B cell (primary cell): ENCODE measurements at regions of chr14 and their contacts with region 1.

Region 1: GRCh38 chr14:49862089-49862673 is 9.6 kb upstream of the NEMF start:
- DNase-seq: peak; percentile 94
- ATAC-seq: peak; percentile 46
- H3K4me3 ChIP-seq: peak overlapping the region; percentile 64 to 99 (median 89)
- H3K4me3 Mint-ChIP-seq: no peak overlapping the region
- H3K27ac ChIP-seq: peak overlapping the region; percentile 96 to 99
- H3K27ac Mint-ChIP-seq: no peak overlapping the region
- H3K4me1 ChIP-seq: peaks cover 35 to 48% of the 10 kb centered on the region in 2 donors
- H3K4me1 Mint-ChIP-seq: peaks cover 25% of the 10 kb centered on the region
- H3K27me3 ChIP-seq: no peaks in the 10 kb centered on the region
- H3K27me3 Mint-ChIP-seq: no peaks in the 10 kb centered on the region
- CTCF ChIP-seq: peak; percentile 100

Region 2: DNA sequence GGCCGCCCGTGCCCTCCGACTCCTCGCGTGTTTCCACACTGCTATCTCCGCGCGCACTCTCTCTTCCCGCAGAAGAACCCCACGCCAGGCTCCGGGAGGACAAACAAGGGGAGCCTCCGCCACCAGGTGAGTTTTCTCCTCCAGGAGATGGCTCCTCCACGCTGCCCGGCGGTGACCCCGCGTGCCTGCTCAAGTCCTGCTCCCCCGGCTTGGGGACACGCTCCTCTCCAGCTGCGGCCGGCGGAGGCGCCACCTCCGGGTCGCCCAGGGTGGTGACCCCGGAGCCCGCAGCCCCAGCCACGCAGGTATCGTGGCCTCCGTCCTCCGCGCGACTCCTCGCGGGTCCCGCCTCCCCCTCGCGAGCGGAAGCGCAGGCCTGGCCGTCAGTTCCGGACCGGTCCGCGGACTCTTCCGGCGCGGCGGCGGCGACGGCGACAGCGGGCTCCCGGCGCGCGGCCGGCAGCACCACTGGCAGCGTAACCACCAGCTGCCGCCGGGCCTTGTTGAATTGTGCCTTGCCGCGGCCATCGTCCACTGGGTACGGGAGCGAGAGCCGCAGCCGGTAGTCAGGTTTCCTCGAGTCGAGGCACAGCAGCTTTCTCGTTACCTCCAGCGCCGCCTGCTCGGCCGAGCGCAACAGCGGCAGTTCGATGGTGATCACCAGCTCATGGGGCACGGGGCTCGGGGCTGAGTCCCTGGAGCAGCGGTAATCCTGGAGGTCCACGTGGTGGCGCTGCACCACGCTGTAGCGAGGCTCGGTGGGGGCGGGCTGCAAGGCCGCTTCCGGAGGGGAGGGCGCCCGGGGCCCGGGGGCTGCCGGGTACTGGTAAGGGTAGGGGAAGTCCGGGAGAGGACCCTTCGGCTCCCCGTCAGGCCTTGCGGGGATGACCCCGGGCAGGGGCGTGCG is 228.3 kb before region 1 on chr14:
- CTCF ChIA-PET with region 1: interaction called, 7 read pairs
- POLR2A ChIA-PET with region 1: interaction called, 14 read pairs
- intact Hi-C with region 1: no loop called
- DNase-seq: peak; percentile 97
- ATAC-seq: peak; percentile 80
- H3K4me3 ChIP-seq: peak overlapping the region; percentile 80 to 98 (median 91)
- H3K4me3 Mint-ChIP-seq: peak overlapping the region; percentile 96
- H3K27ac ChIP-seq: peak overlapping the region; percentile 97 to 98
- H3K27ac Mint-ChIP-seq: peak overlapping the region; percentile 97
- H3K4me1 ChIP-seq: peaks cover 20 to 26% of the 10 kb centered on the region in 2 donors
- H3K4me1 Mint-ChIP-seq: peaks cover 47% of the 10 kb centered on the region
- H3K27me3 ChIP-seq: no peaks in the 10 kb centered on the region
- H3K27me3 Mint-ChIP-seq: no peaks in the 10 kb centered on the region
- CTCF ChIP-seq: peak; percentile 85

Region 3: DNA sequence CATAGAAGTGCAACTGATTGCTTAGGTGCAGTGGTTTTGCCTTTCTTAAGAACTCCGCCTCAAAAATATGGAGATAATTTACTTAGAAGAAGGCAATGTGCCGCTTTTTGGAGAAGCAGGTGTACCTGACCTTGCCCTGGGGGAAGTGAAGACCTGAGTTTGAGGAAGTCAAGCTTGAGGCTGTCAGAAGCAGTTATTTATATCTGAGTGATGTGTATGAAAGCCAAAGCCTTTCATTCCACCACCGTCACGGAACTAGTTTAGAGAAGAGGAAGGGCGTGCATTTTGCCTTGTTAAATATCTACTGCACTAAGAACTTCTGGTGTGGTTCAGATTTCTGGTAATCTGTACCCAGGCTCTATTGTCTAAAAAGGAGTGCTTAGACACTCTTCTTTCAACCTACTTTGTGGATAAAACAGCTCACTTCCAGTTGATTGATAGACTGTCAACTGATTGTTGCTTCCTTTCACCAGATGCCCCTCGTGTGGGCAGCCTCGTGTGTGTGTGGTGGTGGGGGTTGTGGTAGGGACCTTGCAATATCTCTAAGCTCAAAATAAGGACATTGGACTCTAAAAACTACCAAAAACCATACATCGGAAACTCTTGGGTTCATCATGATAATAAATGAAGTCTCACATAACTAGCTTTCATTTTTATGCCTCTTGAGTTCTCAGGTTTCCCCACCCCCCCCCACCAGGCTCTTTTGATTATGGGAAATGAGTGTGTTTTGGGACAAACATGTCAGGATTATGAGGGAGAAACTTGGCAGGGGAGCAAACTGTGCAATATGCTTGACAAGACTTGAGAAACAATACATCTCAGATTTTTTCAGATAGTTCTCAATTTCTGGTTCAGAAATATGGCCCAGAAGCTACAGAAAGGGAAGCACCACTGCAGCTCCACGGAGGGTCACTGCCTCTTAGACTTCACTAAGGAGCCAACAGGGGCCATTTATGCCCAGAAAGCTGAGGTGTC is 109.3 kb after region 1 on chr14:
- CTCF ChIA-PET with region 1: interaction called, 23 read pairs
- POLR2A ChIA-PET with region 1: interaction called, 11 read pairs
- intact Hi-C with region 1: no loop called
- DNase-seq: peak; percentile 92
- ATAC-seq: peak; percentile 85
- H3K4me3 ChIP-seq: peak overlapping the region in 2 of 5 experiments; percentile 30 to 32
- H3K4me3 Mint-ChIP-seq: peak overlapping the region; percentile 55
- H3K27ac ChIP-seq: peak overlapping the region; percentile 98 to 99
- H3K27ac Mint-ChIP-seq: peak overlapping the region; percentile 97
- H3K4me1 ChIP-seq: peaks cover 57 to 70% of the 10 kb centered on the region in 2 donors
- H3K4me1 Mint-ChIP-seq: peaks cover 62% of the 10 kb centered on the region
- H3K27me3 ChIP-seq: no peaks in the 10 kb centered on the region
- H3K27me3 Mint-ChIP-seq: no peaks in the 10 kb centered on the region
- CTCF ChIP-seq: no peak

Region 4: DNA sequence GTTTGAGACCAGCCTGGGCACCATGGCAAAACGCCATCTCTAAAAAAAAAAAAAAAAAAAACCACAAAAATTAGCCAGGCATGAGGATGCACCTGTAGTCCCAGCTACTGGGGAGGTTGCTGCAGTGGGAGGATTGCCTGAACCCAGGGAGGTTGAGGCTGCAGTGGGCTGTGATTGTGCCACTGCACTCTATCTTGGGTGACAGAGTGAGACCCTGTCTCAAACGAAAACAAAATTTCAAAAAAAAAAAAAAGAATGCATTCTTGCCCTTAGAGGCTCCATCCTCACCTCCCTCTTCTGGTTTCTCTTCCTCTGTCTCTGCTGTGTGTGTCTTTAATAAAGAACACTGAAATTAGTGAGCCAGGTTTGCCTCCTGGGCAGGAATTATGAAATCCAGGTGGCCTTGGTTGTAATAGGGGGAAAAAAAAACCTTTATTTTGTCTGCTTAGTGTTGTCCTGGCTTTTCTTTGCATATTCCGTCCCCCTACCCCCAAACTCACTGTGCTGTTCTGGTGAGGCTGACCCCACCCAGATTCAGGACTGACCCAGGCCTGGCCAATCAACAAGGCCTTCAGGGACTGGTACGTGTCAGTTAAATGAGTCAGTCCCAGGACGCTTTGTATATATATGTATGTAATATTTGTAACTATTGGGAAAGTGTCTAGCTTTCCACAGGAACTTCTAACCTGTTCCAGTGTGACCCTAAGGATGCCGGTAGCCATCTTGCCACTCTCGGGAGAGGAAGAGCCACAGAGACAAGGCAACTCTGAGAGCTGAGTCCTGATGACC is 146.6 kb after region 1 on chr14:
- CTCF ChIA-PET with region 1: interaction called, 114 read pairs
- POLR2A ChIA-PET with region 1: interaction called, 16 read pairs
- intact Hi-C with region 1: loop called (anchors 1 kb)
- DNase-seq: peak; percentile 66
- ATAC-seq: peak; percentile 74
- H3K4me3 ChIP-seq: peak overlapping the region in 2 of 5 experiments; percentile 21 to 23
- H3K4me3 Mint-ChIP-seq: peak overlapping the region; percentile 53
- H3K27ac ChIP-seq: peak overlapping the region; percentile 35 to 80
- H3K27ac Mint-ChIP-seq: peak overlapping the region; percentile 83
- H3K4me1 ChIP-seq: peaks cover 40 to 49% of the 10 kb centered on the region in 2 donors
- H3K4me1 Mint-ChIP-seq: peaks cover 63% of the 10 kb centered on the region
- H3K27me3 ChIP-seq: no peaks in the 10 kb centered on the region
- H3K27me3 Mint-ChIP-seq: no peaks in the 10 kb centered on the region
- CTCF ChIP-seq: no peak

Region 5: DNA sequence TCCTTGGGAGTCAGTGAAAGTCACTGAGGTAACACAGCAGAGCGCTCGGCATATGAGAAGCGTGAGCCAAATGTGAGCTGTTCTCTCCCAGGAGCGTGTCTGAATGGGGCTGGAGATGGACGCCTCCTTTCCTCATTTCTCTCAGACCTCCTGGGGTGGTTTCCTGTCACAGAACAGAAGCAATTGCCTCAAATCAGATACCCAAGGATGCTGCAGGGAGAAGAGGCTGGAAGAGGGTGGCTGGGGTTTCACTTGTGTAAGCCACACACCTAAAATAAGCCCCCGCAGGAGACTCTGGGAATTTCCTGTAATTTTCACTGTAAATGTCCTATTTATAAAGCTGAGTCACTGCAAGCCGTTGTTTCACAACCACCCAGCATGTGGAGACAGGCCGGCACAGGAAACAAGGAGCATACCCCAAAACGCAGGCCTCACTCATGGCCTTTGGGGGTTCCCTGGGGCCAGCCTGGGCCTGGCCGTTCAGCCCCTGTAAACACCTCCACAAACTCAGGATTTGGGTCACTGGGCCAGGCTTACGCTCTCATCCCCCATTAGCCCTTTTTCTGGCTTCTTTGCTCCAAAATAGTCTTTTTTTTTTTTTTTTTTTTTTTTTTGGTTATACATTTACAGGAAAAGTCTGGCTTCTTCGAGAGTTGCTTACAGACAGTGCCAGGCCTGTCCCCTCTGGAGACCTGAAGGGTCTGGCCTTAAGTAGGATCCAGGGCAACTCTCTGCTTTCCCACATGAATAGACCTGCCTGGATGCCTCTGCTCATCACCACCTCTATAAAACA is 198.9 kb after region 1 on chr14:
- CTCF ChIA-PET with region 1: interaction called, 89 read pairs
- POLR2A ChIA-PET with region 1: interaction called, 25 read pairs
- intact Hi-C with region 1: loop called (anchors 1 kb)
- DNase-seq: peak; percentile 34
- ATAC-seq: no peak
- H3K4me3 ChIP-seq: peak overlapping the region in 3 of 5 experiments; percentile 0 to 9 (median 2)
- H3K4me3 Mint-ChIP-seq: peak overlapping the region; percentile 95
- H3K27ac ChIP-seq: peak overlapping the region; percentile 92 to 96
- H3K27ac Mint-ChIP-seq: peak overlapping the region; percentile 100
- H3K4me1 ChIP-seq: peaks cover 60 to 82% of the 10 kb centered on the region in 2 donors
- H3K4me1 Mint-ChIP-seq: peaks cover 87% of the 10 kb centered on the region
- H3K27me3 ChIP-seq: no peaks in the 10 kb centered on the region
- H3K27me3 Mint-ChIP-seq: no peaks in the 10 kb centered on the region
- CTCF ChIP-seq: no peak

Region 6: GRCh38 chr14:50099335-50099734 is 237.2 kb after region 1 on chr14:
- CTCF ChIA-PET with region 1: interaction called, 182 read pairs
- POLR2A ChIA-PET with region 1: interaction called, 13 read pairs
- intact Hi-C with region 1: no loop called
- DNase-seq: no peak
- ATAC-seq: no peak
- H3K4me3 ChIP-seq: no peak overlapping the region
- H3K4me3 Mint-ChIP-seq: no peak overlapping the region
- H3K27ac ChIP-seq: no peak overlapping the region
- H3K27ac Mint-ChIP-seq: peak overlapping the region; percentile 28
- H3K4me1 ChIP-seq: peaks cover 42 to 63% of the 10 kb centered on the region in 2 donors
- H3K4me1 Mint-ChIP-seq: peaks cover 66% of the 10 kb centered on the region
- H3K27me3 ChIP-seq: no peaks in the 10 kb centered on the region
- H3K27me3 Mint-ChIP-seq: no peaks in the 10 kb centered on the region
- CTCF ChIP-seq: no peak